Dorsolateral prefrontal cortex (tissue), 120 donors: ENCODE measurements at regions of chr12 and their contacts with region 1.

Region 1: GRCh38 chr12:96219698-96220206 is 25.6 kb downstream of the ELK3 start:
- DNase-seq: no peak
- H3K4me3 ChIP-seq: no peak overlapping the region
- H3K27ac ChIP-seq: no peak overlapping the region
- H3K27me3 ChIP-seq: no peaks in the 10 kb centered on the region
- CTCF ChIP-seq: no peak

Region 2: DNA sequence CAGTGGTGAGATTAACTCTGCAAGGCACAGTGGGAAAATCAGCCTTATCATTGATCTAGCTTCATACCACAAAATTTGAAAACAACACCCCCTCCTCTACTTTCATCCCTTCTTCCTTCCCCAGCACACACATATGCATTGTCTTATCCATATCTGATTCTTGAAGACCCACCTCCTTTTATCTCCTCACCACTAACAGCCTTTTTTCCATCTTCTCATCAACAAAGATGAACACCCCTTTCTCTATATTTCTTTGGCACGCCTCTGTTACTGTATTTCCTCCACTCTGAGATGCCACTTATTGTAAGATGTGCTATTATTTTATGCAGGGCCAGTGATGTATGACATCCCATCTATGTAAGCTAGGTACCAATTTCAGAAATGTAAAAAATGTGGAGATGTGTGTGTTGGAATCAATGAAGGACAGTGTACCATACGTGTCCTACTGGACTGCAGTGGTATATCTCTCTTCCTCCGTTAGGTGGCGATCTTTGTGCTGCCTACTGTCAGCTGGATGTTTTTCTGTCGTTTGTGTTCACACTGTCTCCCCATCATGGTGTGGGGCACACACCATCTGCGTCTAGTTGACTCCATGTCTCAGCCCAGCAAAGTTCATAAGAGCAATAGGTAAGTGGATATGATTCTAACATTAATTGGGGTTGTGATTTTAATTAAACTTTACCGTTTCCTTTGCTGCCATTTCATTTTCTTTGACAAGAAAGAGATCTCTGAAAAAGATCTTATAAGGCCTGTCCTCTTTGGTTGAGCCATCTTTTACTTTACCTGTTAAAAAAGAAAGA is 301.4 kb before region 1 on chr12:
- intact Hi-C with region 1: no loop called
- DNase-seq: peak in 3 of 10 donors; percentile 12 to 44 (median 36)
- H3K4me3 ChIP-seq: no peak overlapping the region
- H3K27ac ChIP-seq: no peak overlapping the region
- H3K27me3 ChIP-seq: peaks cover 0 to 4% (median 0%) of the 10 kb centered on the region in 45 donors
- CTCF ChIP-seq: peak; percentile 42 to 87 (median 74)

Region 3: DNA sequence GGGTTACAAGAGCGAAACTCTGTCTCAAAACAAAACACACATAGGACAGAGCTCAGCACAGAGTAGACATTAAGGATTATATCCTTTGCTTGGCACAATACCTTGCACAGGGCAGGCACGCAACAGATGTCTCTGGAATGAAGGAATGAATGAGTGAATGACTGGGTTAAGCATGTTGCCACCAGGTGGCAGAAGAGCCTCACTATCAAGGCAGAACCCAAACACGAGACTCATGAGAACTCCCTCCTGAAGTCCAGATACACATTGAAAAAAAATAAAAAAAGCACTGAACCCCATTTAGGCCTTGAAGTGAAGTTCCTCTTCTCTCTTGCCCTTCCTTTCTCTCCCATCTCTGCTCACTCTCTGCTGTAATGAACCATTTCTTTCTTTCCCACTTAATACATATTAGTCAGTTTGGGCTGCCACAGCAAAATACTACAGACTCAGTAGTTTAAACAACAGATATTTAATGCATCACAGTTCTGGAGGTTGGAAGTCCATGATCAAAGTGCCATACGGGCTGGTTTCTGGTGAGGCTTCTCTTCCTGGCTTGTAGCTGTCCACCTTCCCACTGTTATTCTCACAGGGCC is 157.8 kb before region 1 on chr12:
- intact Hi-C with region 1: loop called (anchors 2 kb)
- DNase-seq: peak in 9 of 10 donors; percentile 31 to 80 (median 61)
- H3K4me3 ChIP-seq: no peak overlapping the region
- H3K27ac ChIP-seq: no peak overlapping the region
- H3K27me3 ChIP-seq: no peaks in the 10 kb centered on the region
- CTCF ChIP-seq: peak; percentile 59 to 93 (median 84)

Region 4: GRCh38 chr12:96285158-96285557 is 65.4 kb after region 1 on chr12:
- intact Hi-C with region 1: no loop called
- DNase-seq: no peak
- H3K4me3 ChIP-seq: no peak overlapping the region
- H3K27ac ChIP-seq: peak overlapping the region in 1 of 59 donors; percentile 28
- H3K27me3 ChIP-seq: no peaks in the 10 kb centered on the region
- CTCF ChIP-seq: no peak

Region 5: GRCh38 chr12:96516472-96517430 is 297.0 kb after region 1 on chr12:
- intact Hi-C with region 1: loop called (anchors 5 to 10 kb)
- DNase-seq: peak; percentile 58 to 91 (median 68)
- H3K4me3 ChIP-seq: no peak overlapping the region
- H3K27ac ChIP-seq: no peak overlapping the region
- H3K27me3 ChIP-seq: no peaks in the 10 kb centered on the region
- CTCF ChIP-seq: peak; percentile 63 to 92 (median 78)